CD8-positive, alpha-beta T cell (primary cell): ENCODE measurements at regions of chr7 and their contacts with region 1.

Region 1: GRCh38 chr7:113404245-113404644 is 285.9 kb upstream of the SMIM30 start:
- DNase-seq: no peak
- ATAC-seq: no peak
- H3K4me3 ChIP-seq: no peak overlapping the region
- H3K4me3 Mint-ChIP-seq: no peak overlapping the region
- H3K27ac ChIP-seq: no peak overlapping the region
- H3K27ac Mint-ChIP-seq: no peak overlapping the region
- H3K4me1 ChIP-seq: no peaks in the 10 kb centered on the region
- H3K4me1 Mint-ChIP-seq: no peaks in the 10 kb centered on the region
- H3K27me3 ChIP-seq: no peaks in the 10 kb centered on the region
- H3K27me3 Mint-ChIP-seq: peaks cover 11% of the 10 kb centered on the region
- CTCF ChIP-seq: no peak

Region 2: DNA sequence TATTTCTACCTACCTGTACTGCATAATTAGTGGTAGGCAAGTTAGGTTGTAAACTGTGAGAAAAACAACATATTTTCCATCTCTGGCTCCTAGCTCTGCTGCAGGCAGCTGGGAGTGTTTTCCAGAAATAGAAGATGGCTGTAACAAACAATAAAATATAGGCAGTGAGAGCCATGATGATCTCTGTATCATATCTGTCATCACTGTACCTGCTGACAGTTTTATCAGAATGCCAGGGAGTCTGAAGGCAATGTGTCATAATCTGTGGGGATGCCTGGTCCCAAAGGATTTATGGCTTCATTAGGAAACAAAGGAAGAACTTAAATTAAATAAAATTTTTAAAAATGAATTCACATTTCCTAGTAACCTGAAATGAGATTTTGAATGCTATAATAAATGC is 125.0 kb before region 1 on chr7:
- CTCF ChIA-PET with region 1: no interaction called
- POLR2A ChIA-PET with region 1: no interaction called
- intact Hi-C with region 1: no loop called
- DNase-seq: no peak
- ATAC-seq: no peak
- H3K4me3 ChIP-seq: no peak overlapping the region
- H3K4me3 Mint-ChIP-seq: no peak overlapping the region
- H3K27ac ChIP-seq: no peak overlapping the region
- H3K27ac Mint-ChIP-seq: no peak overlapping the region
- H3K4me1 ChIP-seq: no peaks in the 10 kb centered on the region
- H3K4me1 Mint-ChIP-seq: no peaks in the 10 kb centered on the region
- H3K27me3 ChIP-seq: no peaks in the 10 kb centered on the region
- H3K27me3 Mint-ChIP-seq: no peaks in the 10 kb centered on the region
- CTCF ChIP-seq: no peak

Region 3: GRCh38 chr7:113366122-113366521 is 38.1 kb before region 1 on chr7:
- CTCF ChIA-PET with region 1: no interaction called
- POLR2A ChIA-PET with region 1: no interaction called
- intact Hi-C with region 1: no loop called
- DNase-seq: no peak
- ATAC-seq: no peak
- H3K4me3 ChIP-seq: no peak overlapping the region
- H3K4me3 Mint-ChIP-seq: no peak overlapping the region
- H3K27ac ChIP-seq: no peak overlapping the region
- H3K27ac Mint-ChIP-seq: no peak overlapping the region
- H3K4me1 ChIP-seq: no peaks in the 10 kb centered on the region
- H3K4me1 Mint-ChIP-seq: no peaks in the 10 kb centered on the region
- H3K27me3 ChIP-seq: no peaks in the 10 kb centered on the region
- H3K27me3 Mint-ChIP-seq: no peaks in the 10 kb centered on the region
- CTCF ChIP-seq: no peak

Region 4: GRCh38 chr7:113383638-113384037 is 20.6 kb before region 1 on chr7:
- CTCF ChIA-PET with region 1: no interaction called
- POLR2A ChIA-PET with region 1: no interaction called
- intact Hi-C with region 1: no loop called
- DNase-seq: no peak
- ATAC-seq: no peak
- H3K4me3 ChIP-seq: no peak overlapping the region
- H3K4me3 Mint-ChIP-seq: no peak overlapping the region
- H3K27ac ChIP-seq: no peak overlapping the region
- H3K27ac Mint-ChIP-seq: no peak overlapping the region
- H3K4me1 ChIP-seq: no peaks in the 10 kb centered on the region
- H3K4me1 Mint-ChIP-seq: no peaks in the 10 kb centered on the region
- H3K27me3 ChIP-seq: no peaks in the 10 kb centered on the region
- H3K27me3 Mint-ChIP-seq: peaks cover under 1% of the 10 kb centered on the region
- CTCF ChIP-seq: no peak

Region 5: DNA sequence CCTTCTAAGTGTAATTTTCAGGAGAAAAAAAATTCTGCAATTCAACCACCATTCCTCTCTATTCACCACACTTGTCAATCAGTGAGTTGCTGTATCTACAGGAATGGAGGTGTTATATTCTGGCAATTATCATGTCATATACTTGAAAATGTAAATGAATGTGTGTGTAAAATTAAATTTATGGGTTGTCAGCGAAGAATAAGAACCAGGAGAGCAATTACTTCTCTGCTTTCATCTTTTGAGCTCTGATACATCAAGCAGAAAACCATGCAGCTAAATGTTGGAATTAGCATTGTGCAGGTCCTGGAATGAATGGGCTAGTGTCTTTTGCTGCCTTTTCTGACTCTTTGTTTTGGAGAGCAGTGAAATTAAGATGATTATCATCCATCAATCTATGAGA is 1218.0 kb after region 1 on chr7:
- CTCF ChIA-PET with region 1: no interaction called
- POLR2A ChIA-PET with region 1: no interaction called
- intact Hi-C with region 1: loop called in 1 of 2 experiments (anchors 10 kb)
- DNase-seq: no peak
- ATAC-seq: no peak
- H3K4me3 ChIP-seq: no peak overlapping the region
- H3K4me3 Mint-ChIP-seq: no peak overlapping the region
- H3K27ac ChIP-seq: no peak overlapping the region
- H3K27ac Mint-ChIP-seq: no peak overlapping the region
- H3K4me1 ChIP-seq: no peaks in the 10 kb centered on the region
- H3K4me1 Mint-ChIP-seq: no peaks in the 10 kb centered on the region
- H3K27me3 ChIP-seq: no peaks in the 10 kb centered on the region
- H3K27me3 Mint-ChIP-seq: no peaks in the 10 kb centered on the region
- CTCF ChIP-seq: no peak